Cardiac septum (tissue), 1 donor: ENCODE measurements at regions of chr10 and their contacts with region 1.

Region 1: DNA sequence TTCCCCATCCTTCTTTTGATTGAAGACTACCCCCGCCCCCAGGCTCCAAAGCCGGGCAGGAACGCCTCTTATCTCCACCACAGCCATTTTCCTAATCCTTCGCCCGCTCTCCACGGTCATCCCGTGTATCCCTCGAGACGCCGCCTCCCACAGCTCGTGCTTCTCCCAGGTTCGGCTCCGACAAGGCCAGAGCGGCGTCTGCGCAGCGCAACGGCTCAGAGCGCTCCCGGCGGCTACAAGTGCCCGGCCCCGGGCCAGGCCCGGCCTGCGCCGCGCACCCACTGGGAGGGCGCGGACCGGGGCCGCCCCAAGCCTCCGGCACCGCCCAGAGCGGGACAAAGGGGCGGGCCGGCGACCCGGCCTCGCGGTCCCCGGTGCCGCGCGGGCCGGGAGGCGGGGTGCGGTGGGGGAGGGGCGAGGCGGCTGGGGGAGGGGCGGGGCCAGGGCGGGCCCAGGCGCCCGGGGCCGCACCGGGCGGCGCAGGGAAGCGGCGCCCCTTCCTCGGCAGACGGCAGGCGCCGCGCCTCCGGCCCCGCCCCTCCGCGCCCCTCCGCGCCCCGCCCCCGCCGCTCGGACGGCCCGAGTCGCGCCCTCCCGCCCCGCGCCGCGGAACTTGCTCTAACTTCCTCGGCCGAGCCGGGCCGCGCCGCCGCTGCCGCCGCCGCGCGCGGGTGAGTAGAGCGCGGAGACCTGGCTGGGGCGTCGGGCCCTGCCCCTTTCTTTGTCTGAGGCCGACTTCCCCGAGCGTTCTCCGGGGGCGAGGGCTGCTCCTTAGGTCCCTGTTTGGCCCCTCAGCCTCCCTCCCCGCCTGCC is at the start of gene TSPAN14:
- DNase-seq: peak; percentile 93
- total RNA-seq, gene TSPAN14: 20.1 TPM

Region 2: GRCh38 chr10:80414142-80414895 is 39.6 kb before region 1 on chr10:
- intact Hi-C with region 1: loop called (anchors 2 kb)
- DNase-seq: no peak

Region 3: DNA sequence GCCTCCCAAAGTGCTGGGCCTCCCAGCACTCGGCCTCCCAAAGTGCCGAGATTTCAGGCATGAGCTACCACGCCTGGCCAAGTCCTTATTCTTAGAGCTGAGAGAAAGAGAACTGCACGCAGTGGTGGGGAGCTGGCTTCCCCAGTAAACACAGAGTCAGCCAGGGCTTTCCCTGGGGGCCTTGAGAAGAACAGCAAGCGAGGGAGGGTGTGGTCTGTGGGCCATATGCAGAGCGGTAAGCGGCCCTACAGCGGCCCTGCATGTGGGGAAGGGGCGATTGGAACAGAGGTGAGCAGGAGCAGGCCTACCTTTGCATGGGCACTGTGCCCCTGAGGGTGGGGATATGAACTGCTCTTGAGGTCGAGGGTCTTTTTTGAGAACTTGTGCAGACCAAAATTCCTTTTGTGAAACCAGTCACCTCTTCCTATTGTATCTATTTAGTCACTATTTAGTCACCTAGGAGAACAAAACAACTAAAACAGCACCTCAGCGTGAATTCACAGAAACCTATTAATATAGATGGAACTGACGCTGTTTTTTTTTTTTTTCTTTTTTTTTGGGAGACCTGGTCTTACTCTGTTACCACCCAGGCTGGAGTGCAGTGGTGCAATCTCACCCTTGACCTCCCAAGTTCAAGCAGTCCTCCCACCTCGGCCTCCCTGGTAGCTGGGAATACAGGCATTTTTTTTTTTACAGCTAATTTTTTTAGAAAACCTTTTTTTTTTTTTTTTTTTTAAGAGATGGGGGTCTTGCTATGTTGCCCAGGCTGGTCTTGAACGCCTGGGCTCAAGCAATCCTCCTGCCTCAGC is 46.9 kb after region 1 on chr10:
- intact Hi-C with region 1: loop called (anchors 2 kb)
- DNase-seq: peak; percentile 73

Region 4: GRCh38 chr10:80662577-80663261 is 208.8 kb after region 1 on chr10:
- intact Hi-C with region 1: loop called (anchors 5 kb)
- DNase-seq: peak; percentile 91